Colonic mucosa (tissue), 4 donors: ENCODE measurements at regions of chr18 and their contacts with region 1.

Region 1: DNA sequence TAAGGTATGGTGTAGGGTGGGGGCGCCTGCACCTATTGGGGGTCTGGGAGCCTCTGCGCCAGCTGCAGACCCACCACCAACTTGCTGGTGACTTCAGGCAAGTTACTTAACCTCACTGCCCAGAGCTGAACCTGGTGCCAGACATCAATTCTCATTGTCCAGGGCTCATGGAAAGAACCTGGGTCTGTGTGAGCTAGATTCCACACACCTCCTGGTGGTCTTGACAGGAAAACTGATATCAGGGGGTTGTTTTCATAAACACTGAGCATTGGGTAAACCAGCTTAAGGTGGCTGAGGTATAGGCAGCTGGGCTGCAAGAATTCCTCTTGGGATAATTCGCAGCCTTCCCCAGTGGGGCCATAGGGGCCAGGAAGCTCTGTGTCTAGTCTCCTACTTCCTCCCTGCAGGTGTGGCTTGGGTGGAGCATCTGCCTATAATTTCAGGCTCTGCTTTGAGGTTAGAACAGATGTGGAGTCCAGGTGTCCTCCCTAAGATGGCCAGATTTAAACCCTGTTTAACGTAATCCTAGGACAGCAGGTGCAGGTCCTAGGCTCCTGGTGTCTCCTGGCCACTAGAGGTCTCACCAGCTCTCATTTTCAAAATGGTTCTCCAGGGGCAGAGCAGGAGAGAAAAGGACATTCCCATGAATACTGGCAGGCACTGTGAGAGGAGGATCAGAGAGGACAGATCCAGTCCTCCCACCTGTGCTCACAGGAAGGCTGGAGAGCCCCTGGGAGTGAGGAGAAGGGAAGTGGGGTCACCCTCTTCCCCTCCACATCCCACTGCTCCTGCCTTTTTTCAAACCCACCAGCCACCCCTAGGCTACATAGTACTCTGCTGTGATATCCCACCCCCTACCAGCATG is 100.4 kb upstream of the SMAD2 start:
- DNase-seq: peak; percentile 73
- H3K4me3 ChIP-seq: no peak overlapping the region
- H3K27ac ChIP-seq: no peak overlapping the region
- H3K4me1 ChIP-seq: no peaks in the 10 kb centered on the region
- H3K27me3 ChIP-seq: no peaks in the 10 kb centered on the region
- CTCF ChIP-seq: peak; percentile 61

Region 2: GRCh38 chr18:47846431-47846830 is 184.4 kb before region 1 on chr18:
- intact Hi-C with region 1: no loop called
- DNase-seq: no peak
- H3K4me3 ChIP-seq: no peak overlapping the region
- H3K27ac ChIP-seq: no peak overlapping the region
- H3K4me1 ChIP-seq: no peaks in the 10 kb centered on the region
- H3K27me3 ChIP-seq: no peaks in the 10 kb centered on the region
- CTCF ChIP-seq: no peak

Region 3: DNA sequence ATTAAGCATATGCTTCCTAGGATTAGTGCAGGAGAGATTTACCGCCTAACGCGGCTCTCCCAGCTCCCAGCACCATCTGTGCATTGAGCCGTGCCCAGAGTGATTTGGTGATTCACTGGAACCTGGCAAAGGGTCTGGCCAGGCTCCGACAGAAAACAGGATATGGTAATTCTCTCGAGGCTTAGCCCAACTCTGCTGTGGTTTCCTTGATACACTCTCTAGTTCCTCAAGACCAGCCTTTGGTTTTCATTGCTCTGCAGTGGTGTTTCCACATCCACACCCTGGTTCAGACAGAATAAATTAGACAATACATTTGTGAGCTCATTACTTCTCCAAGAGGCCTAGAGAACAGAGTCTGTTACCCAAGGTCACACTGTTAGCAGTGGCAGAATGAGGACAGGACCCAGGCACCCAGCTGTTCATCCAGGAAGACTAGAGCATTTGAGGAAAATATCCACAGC is 77.3 kb before region 1 on chr18:
- intact Hi-C with region 1: no loop called
- DNase-seq: peak; percentile 19
- H3K4me3 ChIP-seq: no peak overlapping the region
- H3K27ac ChIP-seq: no peak overlapping the region
- H3K4me1 ChIP-seq: no peaks in the 10 kb centered on the region
- H3K27me3 ChIP-seq: no peaks in the 10 kb centered on the region
- CTCF ChIP-seq: no peak

Region 4: GRCh38 chr18:48222118-48222517 is 191.3 kb after region 1 on chr18:
- intact Hi-C with region 1: loop called (anchors 10 kb)
- DNase-seq: peak; percentile 78
- H3K4me3 ChIP-seq: no peak overlapping the region
- H3K27ac ChIP-seq: no peak overlapping the region
- H3K4me1 ChIP-seq: no peaks in the 10 kb centered on the region
- H3K27me3 ChIP-seq: no peaks in the 10 kb centered on the region
- CTCF ChIP-seq: no peak

Region 5: DNA sequence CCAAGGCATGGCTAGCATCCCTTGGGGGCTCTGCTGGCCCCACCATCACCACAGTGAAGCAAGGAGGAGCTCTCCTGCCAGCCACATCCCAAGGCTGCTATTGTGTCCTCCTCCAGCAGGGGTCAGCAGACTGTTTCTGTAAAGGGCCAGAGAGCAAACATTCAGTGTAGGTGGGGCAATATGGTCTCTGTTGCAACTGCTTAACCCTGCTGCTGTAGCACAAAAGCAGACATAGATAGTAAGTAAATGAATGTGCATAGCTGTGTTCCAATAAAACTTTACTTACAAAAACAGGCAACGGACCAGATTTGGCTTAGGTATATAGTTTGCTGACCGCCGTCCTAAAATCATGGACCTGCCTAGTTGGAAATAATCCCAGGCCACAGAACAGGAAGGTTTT is 414.7 kb after region 1 on chr18:
- intact Hi-C with region 1: loop called (anchors 2 kb)
- DNase-seq: peak; percentile 87
- H3K4me3 ChIP-seq: no peak overlapping the region
- H3K27ac ChIP-seq: no peak overlapping the region
- H3K4me1 ChIP-seq: no peaks in the 10 kb centered on the region
- H3K27me3 ChIP-seq: no peaks in the 10 kb centered on the region
- CTCF ChIP-seq: peak; percentile 90